ENCODE measurements at regions of chr6 and their contacts with region 1.

Region 1: DNA sequence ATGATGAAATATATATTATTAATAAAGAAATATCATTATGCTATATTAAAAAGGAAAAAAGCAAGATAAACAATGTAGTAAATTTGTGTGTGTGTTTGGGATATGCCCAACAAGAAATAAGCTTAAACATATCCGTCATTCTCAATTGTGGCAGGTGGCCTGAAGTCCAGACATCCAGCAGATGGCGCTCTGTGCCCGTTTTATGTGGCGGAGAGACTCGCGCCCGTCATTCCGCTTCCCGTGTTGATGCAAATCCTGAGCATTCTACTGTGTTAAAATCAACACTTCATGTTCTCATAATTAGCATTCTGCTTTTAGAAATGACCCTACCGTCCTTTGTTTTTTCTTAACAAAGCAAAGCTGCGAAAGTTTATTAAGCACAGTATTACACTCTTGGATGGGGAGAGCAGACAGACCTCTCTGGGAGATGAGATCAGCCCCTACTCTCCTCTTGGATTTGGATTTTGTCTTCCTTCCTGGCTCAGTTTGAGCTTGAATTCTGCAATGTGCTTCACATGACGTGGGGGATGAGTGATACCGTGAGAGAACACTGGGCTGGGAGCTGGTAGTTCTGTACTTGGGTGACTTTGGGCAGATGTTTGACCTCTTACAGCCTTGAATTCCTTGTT is 125.8 kb downstream of the MCHR2 start:
- DNase-seq: peak; percentile 74
- H3K4me3 ChIP-seq: no peak overlapping the region
- H3K27ac ChIP-seq: no peak overlapping the region
- H3K4me1 ChIP-seq: no peaks in the 10 kb centered on the region
- H3K27me3 ChIP-seq: peaks cover 0 to 3% (median 0%) of the 10 kb centered on the region in 3 donors
- CTCF ChIP-seq: peak in 3 of 4 experiments; percentile 43 to 66 (median 60)
- EP300 ChIP-seq: no peak
- POLR2A ChIP-seq: no peak

Region 2: DNA sequence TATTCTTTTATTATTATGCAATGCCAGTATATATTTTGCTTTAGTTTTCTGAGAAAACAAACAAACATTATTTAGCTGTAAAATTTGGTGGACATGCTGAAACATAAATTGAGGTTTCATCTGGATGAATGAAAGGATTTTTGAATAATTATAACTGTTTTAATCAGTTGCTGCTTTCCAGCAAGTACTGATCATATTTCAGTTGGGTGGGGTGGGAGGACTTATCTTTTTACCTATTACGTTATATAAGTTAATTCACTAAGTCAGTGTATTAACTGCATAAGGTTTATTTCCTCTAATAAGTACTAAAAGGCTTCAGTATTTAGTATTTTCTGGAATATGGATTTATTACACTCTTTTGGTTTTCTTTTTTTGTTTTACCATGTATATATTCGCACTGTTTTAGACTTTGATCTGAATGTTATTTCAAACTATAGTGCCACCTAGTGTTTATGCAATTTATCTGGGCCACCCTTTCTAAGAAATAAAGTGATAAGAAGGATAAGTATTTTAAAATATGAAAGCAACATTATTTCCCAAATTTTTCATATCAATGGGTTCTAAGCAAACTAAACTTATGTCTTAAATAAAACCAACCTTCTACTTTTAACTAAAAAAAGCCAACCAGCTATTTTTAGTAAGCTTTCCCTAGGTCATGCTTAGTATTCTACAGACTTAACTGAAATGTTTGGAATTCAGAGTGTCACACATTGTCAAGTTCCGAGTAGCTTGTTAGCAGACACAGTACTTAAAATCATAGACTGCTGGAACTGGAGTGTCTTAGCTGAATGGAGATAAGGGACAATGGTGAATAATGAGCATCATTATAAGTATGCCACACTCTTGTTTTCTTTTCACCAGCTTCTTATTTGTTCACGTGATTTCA is 231.2 kb after region 1 on chr6:
- intact Hi-C with region 1: loop called (anchors 5 kb)
- DNase-seq: no peak
- H3K4me3 ChIP-seq: no peak overlapping the region
- H3K27ac ChIP-seq: no peak overlapping the region
- H3K4me1 ChIP-seq: no peaks in the 10 kb centered on the region
- H3K27me3 ChIP-seq: no peaks in the 10 kb centered on the region
- CTCF ChIP-seq: peak in 2 of 4 experiments; percentile 16 to 54
- EP300 ChIP-seq: no peak
- POLR2A ChIP-seq: no peak

Region 3: DNA sequence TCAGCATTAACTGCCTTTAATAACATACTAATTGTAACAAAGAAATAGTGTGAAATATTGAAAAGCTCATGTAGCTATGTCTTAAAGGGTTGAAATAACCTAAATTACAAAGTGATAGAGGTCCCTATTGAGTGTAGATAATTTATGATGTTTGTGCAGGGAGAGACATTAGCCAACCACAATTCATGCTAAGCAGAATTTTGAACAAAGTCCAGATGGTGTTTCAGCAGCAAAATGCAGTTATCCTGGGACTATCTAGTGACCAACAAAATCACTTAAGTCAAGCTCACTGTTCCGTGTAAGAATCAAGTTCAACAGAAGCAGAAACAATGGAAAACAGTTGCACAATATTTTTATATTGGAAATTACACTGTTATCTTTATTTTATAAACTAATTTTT is 378.0 kb after region 1 on chr6:
- intact Hi-C with region 1: no loop called
- DNase-seq: no peak
- H3K4me3 ChIP-seq: no peak overlapping the region
- H3K27ac ChIP-seq: no peak overlapping the region
- H3K4me1 ChIP-seq: no peaks in the 10 kb centered on the region
- H3K27me3 ChIP-seq: no peaks in the 10 kb centered on the region
- CTCF ChIP-seq: no peak
- EP300 ChIP-seq: no peak
- POLR2A ChIP-seq: no peak